ENCODE measurements at regions of chr1 and their contacts with region 1.

Region 1: GRCh38 chr1:56584910-56585528 is 5.7 kb upstream of the PLPP3 start:
- DNase-seq: no peak
- ATAC-seq: peak; percentile 74

Region 2: GRCh38 chr1:55284852-55285251 is 1300.2 kb before region 1 on chr1:
- intact Hi-C with region 1: loop called (anchors 2 kb)
- DNase-seq: no peak
- ATAC-seq: peak; percentile 81

Region 3: DNA sequence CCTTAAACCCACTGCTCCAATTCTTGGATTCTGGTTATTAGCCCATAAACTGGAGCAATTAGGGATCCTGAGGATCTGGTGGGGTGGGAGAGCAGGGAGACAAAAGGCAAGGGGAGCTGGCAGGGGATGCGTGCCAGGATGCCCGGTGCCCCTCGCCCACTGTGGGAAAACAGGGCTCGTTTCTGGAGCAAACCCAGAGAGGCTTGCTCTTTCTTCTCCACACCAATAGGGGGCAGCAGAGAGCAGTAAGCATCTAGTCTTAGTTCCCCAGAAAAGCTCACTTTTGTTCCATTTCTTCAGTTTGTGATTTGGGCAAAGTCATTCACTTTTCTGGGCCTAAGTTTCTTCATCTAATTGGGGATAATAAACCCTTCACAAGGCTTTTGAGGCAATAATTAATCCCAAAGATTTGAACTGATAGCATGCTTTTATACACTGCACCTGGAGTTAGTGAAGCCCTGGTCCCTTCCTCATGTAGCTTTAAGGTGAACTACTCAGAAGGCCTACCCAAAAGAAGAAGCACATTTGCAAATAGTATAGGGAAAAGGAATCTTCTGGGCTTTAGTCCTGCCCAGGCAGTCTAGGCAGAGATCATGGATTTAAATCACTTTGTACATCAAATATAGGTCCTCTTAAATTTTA is 1209.3 kb before region 1 on chr1:
- intact Hi-C with region 1: loop called (anchors 10 kb)
- DNase-seq: no peak
- ATAC-seq: peak; percentile 36

Region 4: GRCh38 chr1:56456436-56457101 is 128.4 kb before region 1 on chr1:
- intact Hi-C with region 1: no loop called
- DNase-seq: no peak
- ATAC-seq: no peak

Measured in Right ventricle myocardium superior (tissue), 1 donor.